AG04450 (cell line): ENCODE measurements at regions of chr11 and their contacts with region 1.

Region 1: DNA sequence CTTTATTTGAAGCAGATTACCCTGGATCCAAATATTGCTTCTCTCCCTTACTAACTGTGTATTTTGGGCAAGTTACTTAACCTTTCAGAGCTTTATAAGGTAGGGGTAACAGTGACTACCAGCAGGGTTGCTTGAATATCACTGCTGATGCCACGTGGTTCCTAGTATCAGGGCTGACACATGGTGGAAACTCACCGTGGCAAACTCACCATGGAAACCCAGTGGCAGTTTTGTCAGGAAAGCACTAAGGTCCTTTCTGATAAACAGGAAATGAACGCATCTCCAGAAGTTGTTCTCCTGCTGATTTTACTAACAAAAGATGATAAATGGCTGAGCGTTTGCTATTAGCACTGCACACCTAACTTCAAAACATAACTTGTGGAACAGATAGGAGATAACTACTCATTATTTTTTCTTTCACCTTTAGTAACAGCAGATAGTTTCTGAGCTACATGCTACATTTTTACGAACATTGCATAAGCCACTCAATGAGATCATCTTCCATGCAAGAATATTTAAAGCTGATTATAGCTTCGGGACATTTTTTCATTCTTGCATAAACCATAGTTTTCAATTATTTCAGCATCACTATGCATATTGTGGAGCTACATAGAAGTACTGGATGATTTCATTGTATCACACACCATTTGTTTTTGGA is 59.7 kb upstream of the RAG2 start:
- DNase-seq: no peak
- H3K4me3 ChIP-seq: no peak overlapping the region
- H3K27ac ChIP-seq: no peak overlapping the region
- H3K27me3 ChIP-seq: no peaks in the 10 kb centered on the region
- CTCF ChIP-seq: no peak

Region 2: GRCh38 chr11:36672813-36673450 is 15.2 kb after region 1 on chr11:
- CTCF ChIA-PET with region 1: interaction called, 16 read pairs
- POLR2A ChIA-PET with region 1: no interaction called
- DNase-seq: peak; percentile 3
- H3K4me3 ChIP-seq: no peak overlapping the region
- H3K27ac ChIP-seq: no peak overlapping the region
- H3K27me3 ChIP-seq: no peaks in the 10 kb centered on the region
- CTCF ChIP-seq: peak; percentile 66

Region 3: DNA sequence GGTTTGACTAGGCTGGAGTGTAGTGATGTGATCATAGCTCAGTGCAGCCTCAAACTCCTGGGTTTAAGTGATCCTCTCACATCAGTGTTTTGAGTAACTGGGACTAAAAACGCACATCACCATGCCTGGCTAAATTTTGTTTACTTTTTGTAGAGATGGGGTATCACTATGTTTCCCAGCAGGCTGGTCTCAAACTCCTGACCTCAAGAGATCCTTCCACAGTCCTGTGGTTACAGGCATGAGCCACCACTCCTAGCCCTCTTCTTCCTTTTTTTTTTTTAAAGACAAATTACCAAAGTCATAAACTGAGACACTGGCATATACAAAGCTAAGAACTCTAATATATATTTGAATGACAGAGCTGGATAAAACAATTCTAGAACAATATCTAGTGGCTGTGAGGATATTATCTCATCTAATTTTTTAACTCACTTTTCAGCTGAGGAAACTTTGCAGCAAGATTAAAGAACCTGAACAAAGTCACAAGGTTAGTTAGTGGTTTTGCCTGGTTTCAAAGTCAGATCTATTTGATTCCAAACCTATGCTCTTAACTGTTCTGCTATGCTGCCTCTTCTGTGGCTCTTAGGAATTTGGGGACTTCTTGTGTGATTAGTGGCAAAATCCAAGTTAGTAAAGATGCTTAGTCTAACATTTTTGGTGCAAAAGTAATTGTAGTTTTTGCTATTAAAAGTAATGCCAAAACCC is 35.6 kb after region 1 on chr11:
- CTCF ChIA-PET with region 1: no interaction called
- POLR2A ChIA-PET with region 1: no interaction called
- DNase-seq: no peak
- H3K4me3 ChIP-seq: no peak overlapping the region
- H3K27ac ChIP-seq: no peak overlapping the region
- H3K27me3 ChIP-seq: peaks cover 7% of the 10 kb centered on the region
- CTCF ChIP-seq: no peak

Region 4: DNA sequence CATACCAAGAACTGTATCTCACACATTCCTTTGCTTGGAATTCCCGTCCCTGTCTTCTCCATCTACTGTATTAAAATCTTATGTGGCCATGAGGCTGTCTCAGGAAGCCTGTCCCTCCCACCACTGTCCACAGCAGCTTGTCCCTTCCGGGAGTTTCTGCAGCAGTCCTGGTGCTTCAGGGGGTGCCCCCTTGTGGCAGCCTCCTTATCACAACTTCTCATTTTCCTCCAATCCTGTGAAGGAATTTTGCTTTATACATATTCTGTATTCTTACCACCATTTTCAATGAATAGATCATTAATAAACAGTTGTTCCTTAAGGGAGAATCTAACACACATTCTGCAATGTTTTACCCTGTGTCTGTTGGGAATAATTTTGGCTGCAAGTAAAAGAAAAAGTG is 160.7 kb after region 1 on chr11:
- CTCF ChIA-PET with region 1: no interaction called
- POLR2A ChIA-PET with region 1: no interaction called
- DNase-seq: no peak
- H3K4me3 ChIP-seq: no peak overlapping the region
- H3K27ac ChIP-seq: no peak overlapping the region
- H3K27me3 ChIP-seq: no peaks in the 10 kb centered on the region
- CTCF ChIP-seq: peak; percentile 47